GM13977 (cell line): ENCODE measurements at regions of chr20 and their contacts with region 1.

Region 1: GRCh38 chr20:14337400-14338171 is at the start of gene FLRT3:
- DNase-seq: peak; percentile 34
- CTCF ChIP-seq: peak; percentile 76

Region 2: DNA sequence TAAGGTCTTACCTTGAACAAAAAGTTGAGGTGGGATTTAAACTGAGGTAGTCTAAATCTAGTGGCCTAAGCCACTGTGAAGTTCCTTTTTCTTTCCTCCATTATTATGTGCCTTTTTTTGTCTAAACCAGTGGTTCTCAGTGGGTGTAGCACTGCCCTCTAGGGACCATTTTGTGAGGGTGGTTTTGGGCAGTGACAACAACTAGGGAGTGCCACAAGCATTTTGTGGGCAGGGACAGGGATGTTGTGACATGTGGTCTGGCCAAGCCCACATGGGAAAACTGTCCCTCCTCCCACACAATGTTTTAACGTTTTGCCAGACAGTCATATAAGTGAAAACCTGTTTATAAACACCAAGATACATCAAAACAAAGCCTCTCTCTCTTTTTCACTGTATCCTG is 899.2 kb after region 1 on chr20:
- in situ Hi-C with region 1: loop called (anchors 25 kb)
- DNase-seq: peak; percentile 22
- CTCF ChIP-seq: peak; percentile 73